ENCODE measurements at regions of chr1 and their contacts with region 1.

Region 1: GRCh38 chr1:31548907-31549808 is 27.2 kb upstream of the TINAGL1 start:
- DNase-seq: peak; percentile 86
- CTCF ChIP-seq: peak; percentile 95

Region 2: DNA sequence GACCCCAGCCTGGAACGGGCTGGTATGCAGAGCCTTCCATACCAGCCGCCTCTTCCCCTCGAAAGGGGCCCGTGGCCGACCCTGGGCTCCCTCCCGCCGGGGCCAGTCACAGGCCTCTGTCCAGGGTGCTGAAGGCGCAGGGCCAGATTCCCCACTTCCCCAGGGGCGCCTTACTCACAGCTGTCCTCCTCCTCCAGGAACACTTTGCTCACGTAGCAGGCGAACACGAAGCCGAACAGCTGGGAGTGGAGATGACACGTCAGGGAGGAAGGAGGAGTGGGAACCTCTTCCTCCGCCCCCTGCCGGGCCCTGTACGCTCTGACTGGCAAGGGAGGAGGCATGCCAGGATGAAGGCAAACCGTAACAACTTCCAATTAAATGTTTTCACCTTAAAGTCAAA is 366.8 kb before region 1 on chr1:
- in situ Hi-C with region 1: loop called (anchors 10 kb)
- DNase-seq: peak; percentile 84
- CTCF ChIP-seq: no peak

Region 3: GRCh38 chr1:31422505-31423319 is 126.4 kb before region 1 on chr1:
- in situ Hi-C with region 1: loop called (anchors 10 kb)
- DNase-seq: peak; percentile 82
- CTCF ChIP-seq: peak; percentile 80